Activated T-helper 1 cell treated with anti-CD3 and anti-CD28 coated beads, Interleukin-12 subunit alpha, Interleukin-12 subunit beta, Interleukin-2, Interleukin-4 antibody, amounts not matched to agents 30 ng/mL and 10 ng/mL and 1 ng/mL, durations not matched to agents 14 hours and 24 hours and 36 hours (primary cell): ENCODE measurements at regions of chr10 and their contacts with region 1.

Region 1: GRCh38 chr10:27241652-27242472 is 1.3 kb upstream of the ACBD5 start:
- DNase-seq: peak; percentile 87
- H3K4me3 Mint-ChIP-seq: peak overlapping the region; percentile 89
- H3K27ac Mint-ChIP-seq: peak overlapping the region; percentile 93
- H3K4me1 Mint-ChIP-seq: peaks cover 29% of the 10 kb centered on the region
- H3K27me3 Mint-ChIP-seq: no peaks in the 10 kb centered on the region

Region 2: GRCh38 chr10:26697163-26697921 is 544.5 kb before region 1 on chr10 and contains the start of gene PDSS1:
- intact Hi-C with region 1: loop called (anchors 2 kb)
- DNase-seq: peak; percentile 64
- H3K4me3 Mint-ChIP-seq: peak within 1 kb of the TSS; percentile 100
- H3K27ac Mint-ChIP-seq: peak within 1 kb of the TSS; percentile 94
- H3K4me1 Mint-ChIP-seq: peaks cover 31% of the 10 kb centered on the region
- H3K27me3 Mint-ChIP-seq: no peaks in the 10 kb centered on the region
- total RNA-seq, gene PDSS1: 39.3 and 43.1 TPM in 2 replicates

Region 3: DNA sequence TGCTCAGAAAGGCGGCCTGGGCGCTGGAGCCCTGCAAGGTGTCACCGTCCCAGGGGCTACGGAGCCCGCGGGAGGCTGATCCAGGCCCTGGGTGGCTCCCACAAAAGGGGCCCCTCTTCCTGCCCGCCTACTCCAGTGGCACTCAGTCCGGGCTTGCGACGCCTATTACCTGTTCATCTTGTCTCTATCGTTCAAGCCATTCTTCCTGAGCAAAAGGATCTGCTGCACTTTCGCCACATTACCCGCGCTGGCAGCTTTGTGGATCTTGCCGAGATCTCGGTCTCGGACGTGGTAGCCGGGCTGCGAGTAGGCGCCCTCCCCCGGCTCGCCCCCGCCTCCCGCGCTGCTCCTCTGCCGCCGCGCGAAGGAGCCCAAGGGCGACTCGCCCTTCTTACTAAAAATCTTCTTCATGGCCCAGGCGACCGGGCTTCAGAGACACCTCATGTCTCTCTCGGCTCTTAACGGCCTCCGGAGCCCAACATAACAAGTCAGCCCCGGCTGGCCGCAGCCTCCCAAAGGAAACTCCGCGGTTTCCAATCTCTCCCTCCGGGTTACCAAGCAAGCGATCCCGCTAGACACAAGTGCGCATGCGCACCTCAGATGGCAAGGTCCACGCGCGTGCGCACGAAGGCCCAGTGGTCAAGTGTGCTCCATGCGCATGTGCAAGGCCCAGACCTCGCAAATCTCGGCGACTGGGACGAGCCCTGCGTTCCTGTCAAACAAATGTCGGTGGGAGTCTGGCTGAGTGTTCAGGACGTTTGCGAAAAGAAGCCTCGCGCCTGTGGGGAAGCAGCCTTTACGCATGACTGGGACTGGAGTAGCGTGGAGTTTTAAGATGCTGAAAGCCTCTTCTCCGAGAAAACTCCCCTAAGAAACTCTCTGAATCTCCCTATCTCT is 141.7 kb before region 1 on chr10 and contains the start of gene ANKRD26:
- intact Hi-C with region 1: loop called (anchors 1 kb)
- DNase-seq: peak; percentile 96
- H3K4me3 Mint-ChIP-seq: peak within 1 kb of the TSS; percentile 86
- H3K27ac Mint-ChIP-seq: peak within 1 kb of the TSS; percentile 98
- H3K4me1 Mint-ChIP-seq: peaks cover 43% of the 10 kb centered on the region
- H3K27me3 Mint-ChIP-seq: no peaks in the 10 kb centered on the region
- total RNA-seq, gene ANKRD26: 4.3 and 7.0 TPM in 2 replicates

Region 4: GRCh38 chr10:27252267-27253000 is 10.6 kb after region 1 on chr10:
- intact Hi-C with region 1: loop called (anchors 1 kb)
- DNase-seq: peak; percentile 75
- H3K4me3 Mint-ChIP-seq: peak overlapping the region; percentile 78
- H3K27ac Mint-ChIP-seq: peak overlapping the region; percentile 49
- H3K4me1 Mint-ChIP-seq: peaks cover 11% of the 10 kb centered on the region
- H3K27me3 Mint-ChIP-seq: peaks cover 6% of the 10 kb centered on the region

Region 5: DNA sequence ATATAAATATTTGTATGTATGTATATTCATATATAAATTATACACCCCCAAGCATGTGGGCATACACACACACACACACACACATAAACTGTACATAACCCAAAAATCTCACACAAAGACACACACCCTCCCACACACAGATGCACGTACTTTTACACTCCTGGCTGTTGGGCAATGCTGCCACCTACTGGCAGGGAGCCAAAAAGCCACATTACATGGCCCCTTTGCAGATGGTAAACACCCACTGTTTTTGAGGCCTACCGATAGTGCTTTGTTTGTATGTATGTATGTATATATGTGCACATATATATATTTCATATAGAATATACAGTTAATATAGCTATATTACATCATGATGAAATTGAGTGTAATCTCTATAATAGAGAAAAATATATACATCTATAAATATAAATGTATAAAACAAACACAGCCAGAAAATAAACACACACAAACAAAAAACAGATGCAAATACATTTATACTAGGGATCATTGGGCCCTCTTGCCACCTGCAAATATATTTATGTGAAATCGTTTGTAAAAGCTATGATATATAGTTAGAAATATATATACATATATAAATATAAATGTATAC is 118.8 kb after region 1 on chr10:
- intact Hi-C with region 1: loop called (anchors 1 kb)
- DNase-seq: peak; percentile 74
- H3K4me3 Mint-ChIP-seq: no peak overlapping the region
- H3K27ac Mint-ChIP-seq: no peak overlapping the region
- H3K4me1 Mint-ChIP-seq: peaks cover 3% of the 10 kb centered on the region
- H3K27me3 Mint-ChIP-seq: no peaks in the 10 kb centered on the region

Region 6: DNA sequence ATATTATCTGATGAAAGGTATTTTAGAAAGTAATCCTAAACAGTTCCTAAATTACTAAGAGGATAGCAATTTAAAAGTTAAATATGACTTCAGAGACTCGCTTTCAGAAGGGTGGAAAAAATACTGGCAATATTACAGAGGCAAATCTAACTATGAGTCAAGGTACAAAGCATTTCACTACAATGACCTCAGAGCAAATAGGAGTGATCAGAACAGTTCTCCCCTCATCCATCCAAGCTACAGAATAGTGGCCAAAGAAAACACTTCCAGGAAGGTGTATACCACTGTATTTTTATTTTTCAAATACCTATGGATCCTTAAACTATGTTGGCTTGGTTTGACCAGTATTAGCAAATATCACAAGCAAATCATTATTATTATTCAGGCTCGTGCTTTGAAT is 869.9 kb after region 1 on chr10:
- intact Hi-C with region 1: no loop called
- DNase-seq: no peak
- H3K4me3 Mint-ChIP-seq: no peak overlapping the region
- H3K27ac Mint-ChIP-seq: no peak overlapping the region
- H3K4me1 Mint-ChIP-seq: no peaks in the 10 kb centered on the region
- H3K27me3 Mint-ChIP-seq: no peaks in the 10 kb centered on the region